ENCODE measurements at regions of chr19 and their contacts with region 1.

Region 1: GRCh38 chr19:2236314-2237050 is at the starts of genes PLEKHJ1 and SF3A2:
- DNase-seq: peak; percentile 95 to 97
- ATAC-seq: peak; percentile 83 to 90
- H3K4me3 ChIP-seq: peak within 1 kb of the TSS; percentile 67 to 94 (median 86)
- H3K27ac ChIP-seq: peak within 1 kb of the TSS; percentile 94 to 98 (median 97)
- H3K4me1 ChIP-seq: peaks cover 56 to 64% of the 10 kb centered on the region in 2 donors
- H3K27me3 ChIP-seq: no peaks in the 10 kb centered on the region
- CTCF ChIP-seq: peak; percentile 100
- POLR2A ChIP-seq: peak; percentile 75 to 92
- total RNA-seq, gene PLEKHJ1: 50.1 to 72.4 (median 61.6) TPM
- total RNA-seq, gene SF3A2: 23.9 to 29.2 (median 26.5) TPM

Region 2: GRCh38 chr19:2255982-2256685 is 19.7 kb after region 1 on chr19 and contains the start of gene JSRP1:
- in situ Hi-C with region 1: no loop called
- intact Hi-C with region 1: loop called (anchors 1 kb)
- DNase-seq: peak; percentile 95 to 98
- ATAC-seq: peak; percentile 85 to 86
- H3K4me3 ChIP-seq: peak within 1 kb of the TSS; percentile 60 to 77 (median 68)
- H3K27ac ChIP-seq: peak within 1 kb of the TSS; percentile 98 to 100 (median 100)
- H3K4me1 ChIP-seq: peaks cover 17 to 35% of the 10 kb centered on the region in 2 donors
- H3K27me3 ChIP-seq: no peaks in the 10 kb centered on the region
- CTCF ChIP-seq: peak in 2 of 5 experiments; percentile 23 to 42
- POLR2A ChIP-seq: peak; percentile 89 to 90
- total RNA-seq, gene JSRP1: 152 to 383 (median 303) TPM

Region 3: GRCh38 chr19:2274931-2275535 is 38.6 kb after region 1 on chr19:
- in situ Hi-C with region 1: loop called in 1 of 4 experiments (anchors 5 kb)
- intact Hi-C with region 1: loop called (anchors 1 kb)
- DNase-seq: peak in 1 of 2 donors; percentile 73
- ATAC-seq: peak in 1 of 2 donors; percentile 28
- H3K4me3 ChIP-seq: no peak overlapping the region
- H3K27ac ChIP-seq: peak overlapping the region; percentile 35 to 65 (median 54)
- H3K4me1 ChIP-seq: peaks cover 36 to 43% of the 10 kb centered on the region in 2 donors
- H3K27me3 ChIP-seq: no peaks in the 10 kb centered on the region
- CTCF ChIP-seq: peak; percentile 44 to 68 (median 53)
- POLR2A ChIP-seq: no peak

Region 4: DNA sequence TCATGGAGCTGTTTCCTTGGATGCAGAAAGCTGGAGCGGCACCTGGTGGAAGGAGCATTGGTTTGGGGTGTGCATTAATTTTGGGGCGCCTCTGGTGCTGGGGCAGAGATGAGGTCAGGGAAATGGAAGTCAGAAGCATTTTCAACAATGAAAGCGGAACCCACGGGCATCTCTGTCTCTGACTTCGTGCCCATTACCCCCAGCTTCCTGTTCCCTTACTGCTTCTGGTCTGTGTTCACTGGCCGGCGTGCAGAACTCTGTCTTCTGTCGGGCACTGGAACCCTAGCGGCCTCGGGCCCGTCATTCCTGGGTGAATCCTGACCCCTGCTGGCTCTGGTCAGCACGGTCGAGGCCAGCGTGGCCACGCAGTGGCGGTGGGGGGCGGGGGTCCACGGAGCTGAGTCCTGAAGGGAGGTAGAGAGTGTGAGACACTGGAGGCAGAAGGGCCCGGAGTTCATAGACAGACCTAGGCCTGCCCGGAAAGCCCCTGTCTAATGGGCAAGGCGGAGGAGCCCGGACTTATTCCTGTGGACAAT is 79.4 kb after region 1 on chr19:
- in situ Hi-C with region 1: no loop called
- intact Hi-C with region 1: loop called (anchors 2 kb)
- DNase-seq: peak; percentile 49 to 52
- ATAC-seq: peak; percentile 58 to 60
- H3K4me3 ChIP-seq: no peak overlapping the region
- H3K27ac ChIP-seq: no peak overlapping the region
- H3K4me1 ChIP-seq: no peaks in the 10 kb centered on the region
- H3K27me3 ChIP-seq: peaks cover 6 to 14% (median 8%) of the 10 kb centered on the region in 3 donors
- CTCF ChIP-seq: peak; percentile 32 to 72 (median 52)
- POLR2A ChIP-seq: no peak

Region 5: GRCh38 chr19:2391118-2391725 is 154.7 kb after region 1 on chr19:
- in situ Hi-C with region 1: no loop called
- intact Hi-C with region 1: loop called (anchors 1 kb)
- DNase-seq: no peak
- ATAC-seq: peak; percentile 63 to 67
- H3K4me3 ChIP-seq: no peak overlapping the region
- H3K27ac ChIP-seq: no peak overlapping the region
- H3K4me1 ChIP-seq: no peaks in the 10 kb centered on the region
- H3K27me3 ChIP-seq: peaks cover 0 to 3% (median 0%) of the 10 kb centered on the region in 3 donors
- CTCF ChIP-seq: peak; percentile 70 to 81 (median 75)
- POLR2A ChIP-seq: no peak

Measured in gastrocnemius medialis (tissue), 4 donors.